ENCODE measurements at regions of chr16 and their contacts with region 1.

Region 1: GRCh38 chr16:4538350-4539235 is at the start of gene CDIP1:
- DNase-seq: peak; percentile 91
- ATAC-seq: peak; percentile 85
- H3K4me3 Mint-ChIP-seq: peak within 1 kb of the TSS; percentile 64
- H3K27ac Mint-ChIP-seq: peak within 1 kb of the TSS; percentile 84
- H3K4me1 Mint-ChIP-seq: peaks cover 31% of the 10 kb centered on the region
- H3K27me3 Mint-ChIP-seq: no peaks in the 10 kb centered on the region
- total RNA-seq, gene CDIP1: 36.3 to 42.1 TPM

Region 2: DNA sequence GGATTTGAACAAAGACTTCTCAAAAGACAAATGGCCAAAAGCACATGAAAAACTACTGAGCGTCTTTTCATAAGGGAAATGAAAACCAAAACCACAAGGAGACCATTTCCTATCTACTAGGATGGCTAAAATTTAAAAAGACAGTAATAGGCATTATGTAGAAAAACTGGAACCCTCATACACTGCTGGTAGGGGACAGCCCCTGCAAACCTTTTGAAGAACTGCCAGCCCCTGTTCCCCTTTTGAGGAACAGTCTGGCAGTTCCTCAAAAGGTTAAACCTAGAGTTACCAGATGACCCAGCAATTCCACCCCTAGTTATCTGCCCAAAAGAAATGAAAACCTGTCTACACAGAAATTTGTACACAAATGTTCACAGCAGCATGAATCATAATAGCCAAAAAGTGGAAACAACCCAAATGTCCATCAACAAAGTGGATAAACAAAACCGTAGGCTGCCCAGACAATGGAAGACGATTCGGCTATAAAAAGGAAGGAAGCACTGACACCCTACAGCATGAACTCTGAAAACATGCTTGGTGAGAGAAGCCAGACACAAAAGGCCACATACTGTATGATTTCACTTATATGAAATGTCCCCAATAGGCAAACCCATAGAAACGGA is 22.9 kb before region 1 on chr16:
- POLR2A ChIA-PET with region 1: interaction called, 11 read pairs
- DNase-seq: no peak
- ATAC-seq: no peak
- H3K4me3 Mint-ChIP-seq: peak overlapping the region; percentile 77
- H3K27ac Mint-ChIP-seq: peak overlapping the region; percentile 87
- H3K4me1 Mint-ChIP-seq: peaks cover 51% of the 10 kb centered on the region
- H3K27me3 Mint-ChIP-seq: no peaks in the 10 kb centered on the region

Region 3: DNA sequence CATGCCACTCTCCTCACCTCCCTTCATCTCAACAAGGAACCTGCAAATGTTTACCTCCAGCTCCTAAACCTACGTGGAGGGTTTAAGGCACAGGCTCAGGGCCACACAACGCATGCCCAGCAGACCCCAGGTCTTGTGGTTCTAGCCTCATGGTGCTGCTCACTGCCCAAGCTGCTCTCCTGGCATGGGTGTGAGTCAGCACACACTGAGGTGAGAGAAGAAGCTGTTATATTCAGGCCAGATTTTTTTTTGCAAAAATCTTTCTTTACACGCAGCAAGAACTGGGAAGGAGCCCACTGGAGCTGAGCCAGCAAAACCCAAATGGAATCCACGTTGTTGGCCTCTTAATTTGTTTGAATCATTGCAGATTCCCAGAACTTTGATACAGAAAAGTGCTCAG is 12.0 kb after region 1 on chr16:
- POLR2A ChIA-PET with region 1: interaction called, 10 read pairs
- DNase-seq: no peak
- ATAC-seq: no peak
- H3K4me3 Mint-ChIP-seq: no peak overlapping the region
- H3K27ac Mint-ChIP-seq: no peak overlapping the region
- H3K4me1 Mint-ChIP-seq: peaks cover 6% of the 10 kb centered on the region
- H3K27me3 Mint-ChIP-seq: peaks cover 9% of the 10 kb centered on the region